ENCODE measurements at regions of chr12 and their contacts with region 1.

Region 1: GRCh38 chr12:125402874-125403789 is 337.9 kb downstream of the AACS start:
- DNase-seq: no peak
- ATAC-seq: no peak
- H3K4me3 ChIP-seq: no peak overlapping the region
- H3K27ac ChIP-seq: no peak overlapping the region
- H3K4me1 ChIP-seq: no peaks in the 10 kb centered on the region
- H3K27me3 ChIP-seq: peaks cover 0 to 30% (median 23%) of the 10 kb centered on the region in 7 donors
- CTCF ChIP-seq: peak; percentile 24 to 72 (median 63)

Region 2: GRCh38 chr12:125092872-125093680 is 310.1 kb before region 1 on chr12:
- intact Hi-C with region 1: loop called in 3 of 10 experiments (anchors 10 kb)
- DNase-seq: peak in 1 of 2 donors; percentile 42
- ATAC-seq: peak; percentile 58 to 76 (median 68)
- H3K4me3 ChIP-seq: no peak overlapping the region
- H3K27ac ChIP-seq: peak overlapping the region in 6 of 10 donors; percentile 16 to 56 (median 52)
- H3K4me1 ChIP-seq: peaks cover 0 to 21% (median 0%) of the 10 kb centered on the region in 9 donors
- H3K27me3 ChIP-seq: no peaks in the 10 kb centered on the region
- CTCF ChIP-seq: peak in 6 of 9 donors; percentile 9 to 43 (median 30)

Region 3: DNA sequence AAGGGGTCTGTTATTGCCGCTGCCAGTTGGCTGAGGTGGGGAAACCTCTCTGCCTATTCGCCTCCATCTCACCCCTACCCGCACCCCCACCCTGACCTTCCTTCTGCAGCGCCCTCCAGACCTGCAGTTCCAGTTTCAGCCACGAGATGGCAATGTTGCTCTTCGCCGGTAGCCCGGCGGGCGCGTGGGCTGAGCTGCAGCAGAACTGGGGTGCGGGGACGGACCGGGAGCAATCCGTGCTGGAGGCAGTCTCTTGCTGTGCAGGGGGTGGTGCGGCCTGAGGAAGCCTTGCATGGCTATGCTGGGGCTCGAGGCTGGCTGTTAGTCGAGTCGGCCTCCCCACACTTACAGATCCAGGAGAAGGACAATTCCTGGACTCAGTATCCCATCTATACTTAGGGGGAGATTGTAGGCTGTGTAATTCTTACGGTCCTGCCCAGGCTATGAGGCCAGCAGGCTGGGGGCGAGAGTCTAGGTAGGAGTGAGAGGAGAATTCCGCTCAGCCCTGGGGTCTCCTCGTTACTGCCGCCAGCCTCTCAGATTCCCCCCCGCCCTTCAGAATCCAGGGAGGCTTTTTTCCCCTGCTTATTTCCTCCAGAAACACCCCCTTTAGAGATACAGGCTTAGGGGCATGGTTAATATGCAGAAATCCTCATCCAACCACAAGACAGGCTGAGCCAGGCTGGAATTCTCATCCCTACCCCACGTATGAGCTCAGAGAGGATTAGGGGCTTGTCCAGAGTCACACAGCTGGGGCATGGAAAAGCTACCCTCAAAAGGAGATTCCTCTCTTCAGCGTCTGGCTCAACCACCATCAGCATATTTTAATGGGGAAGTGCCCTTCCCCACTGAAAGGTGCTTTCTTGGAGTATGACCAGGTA is 219.7 kb before region 1 on chr12:
- intact Hi-C with region 1: loop called (anchors 2 to 10 kb)
- DNase-seq: peak; percentile 67 to 78
- ATAC-seq: peak; percentile 50 to 84 (median 73)
- H3K4me3 ChIP-seq: no peak overlapping the region
- H3K27ac ChIP-seq: no peak overlapping the region
- H3K4me1 ChIP-seq: peaks cover 3 to 30% (median 11%) of the 10 kb centered on the region in 9 donors
- H3K27me3 ChIP-seq: peaks cover 7 to 72% (median 46%) of the 10 kb centered on the region in 7 donors
- CTCF ChIP-seq: peak; percentile 92 to 100 (median 99)